A549 (cell line): ENCODE measurements at regions of chr1 and their contacts with region 1.

Region 1: GRCh38 chr1:119675349-119676345 is 27.6 kb upstream of the ZNF697 start:
- DNase-seq: peak; percentile 58 to 73
- ATAC-seq: peak; percentile 92 to 95
- H3K4me3 ChIP-seq: peak overlapping the region; percentile 31; the same call in 2 of the 3 replicates
- H3K27ac ChIP-seq: peak overlapping the region in 1 of 2 experiments; percentile 66; a peak in 2 of 6 replicates
- H3K4me1 ChIP-seq: no peaks in the 10 kb centered on the region
- CTCF ChIP-seq: peak; percentile 79
- EP300 ChIP-seq: no peak
- POLR2A ChIP-seq: no peak
- RAD21 ChIP-seq: peak; percentile 57 to 64; a peak in 4 of 5 replicates

Region 2: GRCh38 chr1:119613769-119614720 is 61.6 kb before region 1 on chr1:
- CTCF ChIA-PET with region 1: interaction called, 177 read pairs
- POLR2A ChIA-PET with region 1: no interaction called
- DNase-seq: peak; percentile 35 to 73
- ATAC-seq: peak; percentile 92 to 98
- H3K4me3 ChIP-seq: no peak overlapping the region
- H3K27ac ChIP-seq: no peak overlapping the region
- H3K4me1 ChIP-seq: no peaks in the 10 kb centered on the region
- CTCF ChIP-seq: peak; percentile 69
- EP300 ChIP-seq: no peak
- POLR2A ChIP-seq: no peak
- RAD21 ChIP-seq: peak; percentile 80 to 85

Region 3: DNA sequence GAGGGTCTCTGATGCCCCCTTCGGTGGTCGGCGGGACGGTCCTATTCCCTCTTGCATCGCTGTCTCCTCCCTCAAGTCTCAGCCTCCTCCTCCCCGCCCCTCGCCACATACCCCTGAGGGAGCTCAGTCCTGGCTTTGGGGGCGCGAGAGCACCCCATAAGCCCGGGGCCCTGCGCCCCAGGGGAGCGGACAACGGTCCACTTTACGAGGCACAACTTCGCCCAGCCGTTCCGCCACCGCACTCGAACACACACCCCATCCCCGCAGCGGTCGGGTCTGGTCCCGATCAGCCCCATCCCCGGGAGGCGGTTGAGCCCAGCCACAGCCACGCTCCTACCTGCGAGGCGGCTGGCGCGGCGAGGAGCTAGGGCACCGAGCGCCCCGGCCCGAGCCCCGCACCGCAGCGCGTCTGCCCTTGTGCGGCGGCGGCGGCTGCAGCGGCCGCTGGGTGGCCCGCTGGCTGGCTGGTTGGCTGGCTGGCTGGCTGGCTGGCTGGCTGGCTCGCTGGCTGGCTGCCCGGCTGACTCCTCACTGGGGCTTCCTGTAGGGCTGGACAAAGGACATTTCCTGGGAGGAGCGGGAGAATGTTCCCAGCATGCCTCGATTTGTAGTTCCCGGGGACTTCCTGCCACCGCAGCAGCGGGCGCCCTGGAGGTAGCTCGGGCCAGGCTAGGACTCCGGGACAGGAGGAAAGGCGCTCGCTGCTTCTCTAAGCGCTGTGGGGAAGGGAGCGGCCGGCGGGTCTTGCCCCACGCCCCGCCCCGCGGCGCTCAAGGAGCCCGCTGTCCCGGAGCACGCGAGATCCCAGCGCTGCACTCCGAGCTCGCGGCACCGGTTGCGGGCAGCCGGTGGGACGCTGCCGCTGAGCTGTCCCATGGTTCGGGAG is 27.7 kb before region 1 on chr1 and contains the start of gene ZNF697:
- CTCF ChIA-PET with region 1: interaction called, 42 read pairs
- POLR2A ChIA-PET with region 1: no interaction called
- DNase-seq: peak; percentile 85 to 90
- ATAC-seq: peak; percentile 94 to 99
- H3K4me3 ChIP-seq: peak within 1 kb of the TSS; percentile 94
- H3K27ac ChIP-seq: peak within 1 kb of the TSS; percentile 92 to 99
- H3K4me1 ChIP-seq: peaks cover 22% of the 10 kb centered on the region; the same call in 2 of the 3 replicates
- CTCF ChIP-seq: no peak
- EP300 ChIP-seq: no peak
- POLR2A ChIP-seq: peak; percentile 80
- RAD21 ChIP-seq: no peak
- polyA plus RNA-seq, gene ZNF697: 2.1 and 2.6 TPM in 2 replicates

Region 4: DNA sequence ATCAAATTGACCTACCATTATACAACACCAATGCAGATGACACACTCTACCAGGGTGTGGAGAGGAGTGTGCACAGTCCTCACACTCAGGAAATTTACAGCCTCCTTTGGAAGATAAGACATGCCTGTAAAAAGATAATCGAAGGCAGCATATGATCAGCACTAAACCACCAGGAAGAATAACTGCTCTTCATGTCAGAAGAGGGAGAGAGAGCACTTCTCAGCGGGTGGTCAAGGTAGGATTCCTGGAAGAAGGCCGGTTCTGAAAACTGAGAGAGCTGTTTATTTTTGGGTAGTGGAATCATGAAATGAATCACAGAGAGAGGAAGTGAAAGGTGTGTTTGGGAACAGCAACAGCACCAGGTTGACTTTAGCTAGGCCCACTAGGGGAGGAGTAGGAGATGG is 13.6 kb before region 1 on chr1:
- CTCF ChIA-PET with region 1: interaction called, 42 read pairs
- POLR2A ChIA-PET with region 1: no interaction called
- DNase-seq: no peak
- ATAC-seq: no peak
- H3K4me3 ChIP-seq: no peak overlapping the region
- H3K27ac ChIP-seq: no peak overlapping the region
- H3K4me1 ChIP-seq: no peaks in the 10 kb centered on the region
- CTCF ChIP-seq: no peak
- EP300 ChIP-seq: no peak
- POLR2A ChIP-seq: no peak
- RAD21 ChIP-seq: no peak